ENCODE measurements at regions of chr2 and their contacts with region 1.

Region 1: DNA sequence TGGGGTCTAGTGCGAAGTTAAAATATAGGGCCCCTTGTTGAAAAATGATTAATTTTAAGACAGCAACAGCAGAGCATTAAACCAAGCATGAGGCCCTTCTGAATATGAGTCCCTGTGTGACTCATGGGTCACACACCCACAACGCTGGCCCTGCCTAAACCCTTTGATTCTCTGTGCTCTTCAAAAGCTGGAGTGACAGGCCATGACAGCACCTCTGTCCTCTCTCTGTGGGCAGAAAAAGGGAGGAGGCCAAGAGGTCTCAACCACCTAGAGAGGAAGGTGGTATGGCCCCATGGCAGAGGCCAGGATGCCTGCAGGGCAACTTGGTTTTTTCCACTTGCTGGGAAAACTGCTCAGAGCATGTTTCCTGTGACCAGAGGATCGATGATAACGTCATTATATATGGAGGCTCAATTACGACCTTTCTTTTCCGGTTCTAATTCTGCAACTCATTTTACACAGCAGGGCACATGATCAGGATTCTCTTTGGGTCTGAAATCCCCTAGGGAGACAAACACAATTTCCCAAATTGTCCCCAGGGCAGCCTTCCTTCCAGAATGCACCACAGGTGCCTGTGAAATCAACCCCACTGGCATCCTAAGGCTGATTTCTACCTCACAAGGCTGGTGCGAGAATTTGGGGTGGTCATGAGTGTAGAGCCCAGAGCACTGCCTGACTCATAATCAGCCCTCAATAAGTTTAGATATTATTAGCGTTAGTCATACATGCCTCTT is 102.0 kb upstream of the PPP1CB start:
- DNase-seq: no peak
- H3K4me3 Mint-ChIP-seq: no peak overlapping the region
- H3K27ac Mint-ChIP-seq: peak overlapping the region; percentile 84
- H3K4me1 Mint-ChIP-seq: peaks cover 48% of the 10 kb centered on the region
- H3K27me3 Mint-ChIP-seq: no peaks in the 10 kb centered on the region

Region 2: GRCh38 chr2:28583899-28584553 is 65.6 kb before region 1 on chr2:
- intact Hi-C with region 1: loop called (anchors 1 kb)
- DNase-seq: peak; percentile 44
- H3K4me3 Mint-ChIP-seq: peak overlapping the region; percentile 29
- H3K27ac Mint-ChIP-seq: peak overlapping the region; percentile 74
- H3K4me1 Mint-ChIP-seq: peaks cover 44% of the 10 kb centered on the region
- H3K27me3 Mint-ChIP-seq: no peaks in the 10 kb centered on the region

Region 3: DNA sequence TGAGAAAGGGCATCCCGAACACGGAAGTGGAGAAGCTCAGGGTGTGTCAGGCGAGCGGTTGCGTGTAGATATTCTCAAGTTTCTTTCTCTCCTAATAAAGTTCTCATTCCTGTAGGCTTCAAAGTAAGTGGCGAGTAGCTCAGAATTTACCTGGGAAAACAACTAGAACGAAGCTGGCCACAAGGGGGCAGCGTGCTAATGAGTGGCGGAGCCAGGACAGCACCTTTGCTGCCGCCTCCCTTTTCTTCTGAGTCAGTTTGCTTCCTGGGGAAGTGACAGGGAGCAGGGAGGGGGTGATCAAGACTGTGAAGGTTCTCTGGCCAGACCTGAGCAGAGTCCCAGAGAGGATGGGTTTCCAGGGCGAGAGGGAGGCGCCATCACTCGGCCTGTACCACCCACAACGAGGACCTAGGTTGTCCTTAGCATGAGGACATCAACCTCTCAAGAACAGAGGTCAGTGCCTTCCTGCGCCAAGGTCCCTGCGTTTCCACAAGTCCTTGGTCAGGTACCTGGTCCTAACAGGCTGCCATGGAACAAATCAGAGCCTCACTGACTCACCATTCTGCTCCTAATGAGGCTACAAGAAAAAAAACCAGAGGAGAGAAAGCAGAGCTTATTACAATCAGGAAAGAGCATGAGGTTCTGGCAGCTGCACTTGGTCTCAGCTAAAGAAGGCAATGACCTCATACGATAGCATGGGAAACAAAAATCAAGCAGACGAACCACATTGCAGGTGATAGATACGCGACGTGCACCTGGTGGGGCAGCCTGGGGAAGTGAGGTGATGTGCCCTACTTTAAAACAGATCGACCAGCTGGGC is 55.1 kb before region 1 on chr2:
- intact Hi-C with region 1: loop called (anchors 1 kb)
- DNase-seq: peak; percentile 71
- H3K4me3 Mint-ChIP-seq: peak overlapping the region; percentile 49
- H3K27ac Mint-ChIP-seq: peak overlapping the region; percentile 78
- H3K4me1 Mint-ChIP-seq: peaks cover 30% of the 10 kb centered on the region
- H3K27me3 Mint-ChIP-seq: peaks cover 4% of the 10 kb centered on the region

Region 4: DNA sequence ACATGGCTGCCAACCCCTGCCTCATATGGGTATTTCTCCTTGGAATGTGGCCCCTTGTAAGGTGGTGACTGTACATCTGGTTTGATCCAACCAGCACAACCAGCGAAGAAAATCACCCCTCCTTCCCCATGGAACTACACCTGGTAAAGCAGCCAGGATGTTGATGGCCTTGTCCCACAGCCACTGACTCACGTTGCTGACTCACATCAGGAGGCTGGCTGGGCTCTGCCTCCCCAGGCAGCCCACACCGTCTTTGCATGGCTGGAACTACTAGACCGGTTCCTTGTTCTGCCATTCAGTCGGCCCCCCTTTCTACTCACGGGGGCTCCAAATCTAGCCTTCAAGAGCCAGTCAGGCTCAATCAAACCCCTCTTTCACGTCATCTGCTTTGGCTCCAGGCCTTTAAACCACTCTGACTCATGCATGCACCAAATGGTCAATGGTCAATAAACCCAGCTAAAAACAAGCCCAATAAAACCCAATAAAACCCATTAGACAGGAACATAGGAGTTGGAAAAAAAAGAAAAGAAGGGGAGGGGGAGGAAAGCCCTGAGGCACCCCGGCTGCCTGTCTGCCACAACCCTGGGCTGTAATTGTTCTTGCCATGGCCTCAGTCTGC is 39.0 kb before region 1 on chr2:
- intact Hi-C with region 1: loop called (anchors 5 kb)
- DNase-seq: no peak
- H3K4me3 Mint-ChIP-seq: peak overlapping the region; percentile 47
- H3K27ac Mint-ChIP-seq: peak overlapping the region; percentile 29
- H3K4me1 Mint-ChIP-seq: peaks cover 30% of the 10 kb centered on the region
- H3K27me3 Mint-ChIP-seq: no peaks in the 10 kb centered on the region

Measured in activated T-helper 1 cell treated with anti-CD3 and anti-CD28 coated beads, Interleukin-12 subunit alpha, Interleukin-12 subunit beta, Interleukin-2, Interleukin-4 antibody, amounts not matched to agents 30 ng/mL and 10 ng/mL and 1 ng/mL, durations not matched to agents 14 hours and 24 hours and 36 hours (primary cell).